ENCODE measurements at regions of chr1 and their contacts with region 1.

Region 1: GRCh38 chr1:98468111-98468717 is 193.3 kb upstream of the SNX7 start:
- DNase-seq: peak; percentile 11
- H3K4me3 ChIP-seq: no peak overlapping the region
- H3K27me3 ChIP-seq: no peaks in the 10 kb centered on the region
- CTCF ChIP-seq: peak; percentile 83

Region 2: DNA sequence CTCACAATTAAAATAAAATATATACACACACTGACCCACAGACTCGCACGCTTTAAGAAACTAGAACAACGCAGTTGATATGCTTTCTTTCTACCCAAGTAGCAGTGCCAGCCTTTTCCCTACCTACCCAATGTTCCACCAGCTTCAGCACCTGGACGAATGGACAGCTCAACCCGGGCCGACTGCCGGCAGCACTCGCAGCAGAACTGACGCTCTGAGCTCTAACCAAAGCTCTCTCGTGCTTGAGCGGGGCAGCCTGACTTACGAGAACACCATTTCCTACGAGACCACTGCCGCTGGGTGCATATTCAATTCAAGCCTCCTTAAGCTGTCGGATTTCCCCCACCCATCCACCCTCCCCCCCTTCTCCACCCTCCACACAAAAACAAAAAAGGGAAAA is 420.0 kb before region 1 on chr1:
- CTCF ChIA-PET with region 1: interaction called, 23 read pairs
- POLR2A ChIA-PET with region 1: no interaction called
- DNase-seq: no peak
- H3K4me3 ChIP-seq: peak overlapping the region; percentile 38
- H3K27me3 ChIP-seq: no peaks in the 10 kb centered on the region
- CTCF ChIP-seq: 0 out of 2 replicates have a peak, but pooled peaks have one; percentile 19

Region 3: DNA sequence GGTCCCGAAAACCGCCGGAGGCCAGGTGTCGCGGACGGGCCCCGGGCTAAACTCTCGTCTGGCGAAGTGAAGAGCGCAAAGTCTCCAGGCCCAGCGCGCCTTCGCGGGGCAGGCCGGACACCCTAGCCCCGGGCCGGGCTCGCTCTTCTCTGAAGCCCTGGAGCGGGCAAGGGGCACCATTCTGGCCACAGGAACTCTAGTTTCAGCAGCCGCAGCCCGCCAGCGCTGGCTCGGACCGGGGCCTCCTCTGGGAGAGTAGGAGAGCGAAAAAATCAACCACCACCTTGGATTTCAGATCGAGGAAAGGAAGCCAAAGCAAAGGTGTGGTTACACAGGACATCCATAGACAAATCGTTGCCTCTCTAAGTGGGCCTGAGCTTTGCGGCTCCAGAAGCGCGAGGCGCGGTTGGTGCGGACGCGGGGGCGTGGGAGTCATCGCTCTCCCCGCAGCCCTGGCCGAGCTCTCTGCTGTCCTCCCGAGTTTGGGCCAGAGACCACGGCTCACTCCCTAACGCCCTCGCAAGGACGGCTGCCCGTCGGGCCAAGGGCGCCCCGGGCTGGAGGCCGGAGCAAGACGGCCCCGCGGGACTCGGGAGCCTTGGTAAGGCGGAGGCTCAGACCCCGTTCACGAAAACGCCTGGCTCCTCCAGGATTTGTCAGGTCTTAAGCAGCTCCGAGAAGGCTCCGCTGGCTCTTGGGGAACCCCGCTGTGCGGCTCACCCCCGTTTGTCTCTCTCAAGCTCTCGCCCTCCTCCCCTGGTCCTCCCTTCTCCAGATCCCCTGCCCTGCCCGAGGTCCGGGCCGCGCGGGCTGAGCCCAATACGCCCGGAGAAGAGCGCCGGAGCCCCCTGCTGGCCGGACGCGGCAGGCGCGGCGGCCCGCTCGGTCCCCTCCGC is 414.5 kb before region 1 on chr1:
- CTCF ChIA-PET with region 1: interaction called, 23 read pairs
- POLR2A ChIA-PET with region 1: no interaction called
- DNase-seq: no peak
- H3K4me3 ChIP-seq: peak overlapping the region; percentile 45
- H3K27me3 ChIP-seq: no peaks in the 10 kb centered on the region
- CTCF ChIP-seq: peak; percentile 53